ENCODE measurements at regions of chr11 and their contacts with region 1.

Region 1: GRCh38 chr11:86608251-86608799 is 64.1 kb downstream of the ME3 start:
- DNase-seq: peak; percentile 76
- H3K4me3 ChIP-seq: no peak overlapping the region
- H3K4me3 Mint-ChIP-seq: peak overlapping the region; percentile 45
- H3K27ac Mint-ChIP-seq: no peak overlapping the region
- H3K4me1 ChIP-seq: peaks cover 7% of the 10 kb centered on the region; the same call in 1 of the 2 replicates
- H3K4me1 Mint-ChIP-seq: peaks cover 23% of the 10 kb centered on the region
- H3K27me3 ChIP-seq: no peaks in the 10 kb centered on the region
- H3K27me3 Mint-ChIP-seq: no peaks in the 10 kb centered on the region
- CTCF ChIP-seq: peak; percentile 95 to 99

Region 2: DNA sequence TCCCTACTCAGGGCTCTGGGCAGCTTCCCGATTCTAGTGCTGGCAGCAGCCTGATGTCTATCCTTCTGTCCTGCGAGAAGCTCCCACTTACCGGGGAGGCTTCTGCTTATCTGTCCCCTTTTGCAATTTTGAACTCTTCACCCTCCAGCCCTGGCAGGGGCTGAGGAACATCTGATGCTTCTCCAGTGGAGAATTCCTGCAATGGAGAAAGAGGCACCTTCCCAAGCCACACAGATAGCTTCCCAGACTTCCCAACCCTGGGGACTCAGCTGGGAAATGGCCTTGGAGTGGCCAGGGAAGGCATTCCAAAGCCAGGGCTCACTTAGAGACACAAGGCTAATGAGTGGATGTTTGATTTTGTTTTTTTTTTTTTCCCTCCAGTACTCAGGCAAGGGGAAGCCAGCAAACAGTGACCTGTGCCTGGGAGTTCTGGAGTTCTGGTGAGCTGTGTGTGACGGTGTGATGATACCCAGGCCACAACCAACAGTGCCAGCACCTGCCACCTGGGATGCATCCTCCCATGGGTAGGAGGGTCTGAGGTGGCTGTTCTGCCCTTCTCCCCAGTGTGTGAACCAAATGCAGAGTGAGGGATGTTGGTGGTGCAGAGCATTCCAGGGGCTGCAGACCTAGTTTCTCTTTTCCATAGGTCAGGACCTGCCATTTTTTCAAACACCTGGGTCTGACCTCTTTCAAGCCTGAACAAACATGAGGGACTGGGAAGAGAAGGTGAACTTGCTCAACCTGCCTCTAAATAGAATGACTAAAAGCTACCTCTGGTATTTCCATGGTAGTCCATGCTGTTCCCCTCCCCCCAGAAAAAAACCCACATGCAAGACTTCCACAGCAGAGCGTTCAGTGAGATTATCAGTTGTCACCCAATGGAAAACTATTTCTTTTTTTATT is 138.6 kb before region 1 on chr11:
- CTCF ChIA-PET with region 1: interaction called, 12 read pairs
- POLR2A ChIA-PET with region 1: no interaction called
- intact Hi-C with region 1: no loop called
- DNase-seq: peak; percentile 89 to 91
- H3K4me3 ChIP-seq: no peak overlapping the region
- H3K4me3 Mint-ChIP-seq: peak overlapping the region; percentile 36
- H3K27ac Mint-ChIP-seq: peak overlapping the region; percentile 70
- H3K4me1 ChIP-seq: peaks cover 44% of the 10 kb centered on the region
- H3K4me1 Mint-ChIP-seq: peaks cover 58% of the 10 kb centered on the region
- H3K27me3 ChIP-seq: no peaks in the 10 kb centered on the region
- H3K27me3 Mint-ChIP-seq: no peaks in the 10 kb centered on the region
- CTCF ChIP-seq: no peak

Region 3: DNA sequence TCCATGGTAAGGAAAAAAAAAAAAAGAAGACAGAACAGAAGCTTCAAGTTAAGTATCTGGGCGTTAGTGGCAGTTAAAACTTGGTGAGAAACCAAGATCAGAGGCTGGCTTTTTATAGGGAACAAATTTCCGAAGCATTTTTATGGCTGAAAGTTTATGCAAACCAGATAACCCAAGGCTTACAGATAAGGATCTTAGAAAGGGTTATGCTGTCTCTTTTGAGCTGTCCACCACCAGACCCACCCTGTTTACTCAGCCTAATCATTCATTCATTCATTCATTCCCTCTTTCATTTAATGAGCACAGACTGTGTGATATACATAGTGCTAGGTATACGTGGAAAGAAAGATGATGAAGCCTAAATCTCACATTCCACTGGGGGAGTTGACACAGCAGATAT is 25.4 kb before region 1 on chr11:
- CTCF ChIA-PET with region 1: interaction called, 15 read pairs
- POLR2A ChIA-PET with region 1: no interaction called
- intact Hi-C with region 1: no loop called
- DNase-seq: peak; percentile 46 to 53
- H3K4me3 ChIP-seq: no peak overlapping the region
- H3K4me3 Mint-ChIP-seq: peak overlapping the region; percentile 18
- H3K27ac Mint-ChIP-seq: peak overlapping the region; percentile 23
- H3K4me1 ChIP-seq: peaks cover 58% of the 10 kb centered on the region
- H3K4me1 Mint-ChIP-seq: peaks cover 21% of the 10 kb centered on the region
- H3K27me3 ChIP-seq: no peaks in the 10 kb centered on the region
- H3K27me3 Mint-ChIP-seq: no peaks in the 10 kb centered on the region
- CTCF ChIP-seq: no peak

Region 4: DNA sequence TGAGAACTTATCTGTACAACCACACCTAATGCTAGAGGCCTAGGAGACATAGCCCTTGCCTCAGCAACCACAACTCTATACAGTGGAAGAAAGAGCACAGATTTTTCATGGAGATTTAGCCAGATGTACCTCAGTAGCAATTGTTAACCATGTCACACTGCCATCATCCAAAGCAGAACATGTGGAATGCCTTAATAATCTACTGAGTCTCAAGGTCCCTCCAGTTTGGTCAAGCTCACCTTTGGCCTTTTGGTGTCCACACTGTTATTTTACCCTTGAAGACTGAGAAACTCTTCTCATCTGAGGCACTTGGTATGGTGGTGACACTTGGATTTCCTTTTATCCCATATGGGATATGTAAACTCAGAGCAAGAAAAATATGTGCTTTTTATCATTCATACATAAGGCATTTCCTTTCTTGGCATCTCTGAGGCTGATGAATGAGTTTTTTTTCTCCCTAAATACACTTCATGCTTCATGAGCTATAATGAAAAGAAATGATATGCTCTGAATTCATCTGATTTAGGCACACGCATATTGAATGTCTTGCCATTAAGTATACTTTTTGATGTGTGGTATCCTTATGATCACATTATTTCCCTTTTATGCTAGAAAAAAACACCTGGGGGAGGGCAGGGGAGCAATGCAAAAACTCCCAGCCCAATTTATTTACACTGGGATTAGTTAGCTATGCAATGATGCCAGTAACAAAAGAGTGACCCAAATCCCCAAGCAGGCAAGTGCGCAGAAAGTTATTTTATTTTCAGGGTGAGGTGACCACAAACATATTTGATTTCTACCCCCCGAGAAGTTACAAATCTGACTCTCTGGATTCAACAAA is 127.4 kb after region 1 on chr11:
- CTCF ChIA-PET with region 1: interaction called, 11 read pairs
- POLR2A ChIA-PET with region 1: no interaction called
- intact Hi-C with region 1: no loop called
- DNase-seq: peak in 1 of 2 experiments; percentile 65
- H3K4me3 ChIP-seq: no peak overlapping the region
- H3K4me3 Mint-ChIP-seq: peak overlapping the region; percentile 45
- H3K27ac Mint-ChIP-seq: peak overlapping the region; percentile 95
- H3K4me1 ChIP-seq: peaks cover 72% of the 10 kb centered on the region
- H3K4me1 Mint-ChIP-seq: peaks cover 62% of the 10 kb centered on the region
- H3K27me3 ChIP-seq: no peaks in the 10 kb centered on the region
- H3K27me3 Mint-ChIP-seq: no peaks in the 10 kb centered on the region
- CTCF ChIP-seq: no peak

Region 5: DNA sequence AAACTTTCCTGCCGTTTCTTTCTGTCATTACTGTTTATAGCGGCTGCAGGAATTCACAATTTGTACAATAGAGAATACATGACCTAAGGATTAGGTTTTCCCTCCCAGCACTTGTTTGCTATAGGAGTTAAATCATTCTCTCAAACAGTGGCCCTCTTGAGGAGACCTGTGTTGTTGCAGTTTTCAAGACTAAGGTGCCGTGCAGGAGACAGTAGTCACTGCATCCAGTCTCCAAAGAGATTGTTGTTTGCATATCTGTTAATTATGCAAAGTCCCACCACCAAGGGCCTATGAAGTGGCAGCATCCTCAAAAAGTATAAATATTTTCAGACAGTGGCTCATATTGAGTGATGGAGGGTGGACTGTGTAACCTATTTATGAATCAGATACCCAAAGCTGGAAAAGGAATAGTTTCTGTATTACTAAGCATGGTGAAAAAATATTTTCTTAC is 194.3 kb after region 1 on chr11:
- CTCF ChIA-PET with region 1: interaction called, 39 read pairs
- POLR2A ChIA-PET with region 1: no interaction called
- intact Hi-C with region 1: loop called (anchors 1 kb)
- DNase-seq: peak; percentile 80
- H3K4me3 ChIP-seq: peak overlapping the region; percentile 89
- H3K4me3 Mint-ChIP-seq: peak overlapping the region; percentile 95
- H3K27ac Mint-ChIP-seq: peak overlapping the region; percentile 99
- H3K4me1 ChIP-seq: peaks cover 81% of the 10 kb centered on the region
- H3K4me1 Mint-ChIP-seq: peaks cover 71% of the 10 kb centered on the region
- H3K27me3 ChIP-seq: no peaks in the 10 kb centered on the region
- H3K27me3 Mint-ChIP-seq: no peaks in the 10 kb centered on the region
- CTCF ChIP-seq: peak; percentile 80 to 92

Region 6: GRCh38 chr11:86919557-86920210 is 311.4 kb after region 1 on chr11:
- CTCF ChIA-PET with region 1: interaction called, 3 read pairs
- POLR2A ChIA-PET with region 1: no interaction called
- intact Hi-C with region 1: loop called (anchors 1 kb)
- DNase-seq: peak; percentile 60 to 77
- H3K4me3 ChIP-seq: no peak overlapping the region
- H3K4me3 Mint-ChIP-seq: no peak overlapping the region
- H3K27ac Mint-ChIP-seq: no peak overlapping the region
- H3K4me1 ChIP-seq: peaks cover 32% of the 10 kb centered on the region
- H3K4me1 Mint-ChIP-seq: peaks cover 30% of the 10 kb centered on the region
- H3K27me3 ChIP-seq: no peaks in the 10 kb centered on the region
- H3K27me3 Mint-ChIP-seq: no peaks in the 10 kb centered on the region
- CTCF ChIP-seq: peak; percentile 91 to 95